ENCODE measurements at regions of chr21 and their contacts with region 1.

Region 1: DNA sequence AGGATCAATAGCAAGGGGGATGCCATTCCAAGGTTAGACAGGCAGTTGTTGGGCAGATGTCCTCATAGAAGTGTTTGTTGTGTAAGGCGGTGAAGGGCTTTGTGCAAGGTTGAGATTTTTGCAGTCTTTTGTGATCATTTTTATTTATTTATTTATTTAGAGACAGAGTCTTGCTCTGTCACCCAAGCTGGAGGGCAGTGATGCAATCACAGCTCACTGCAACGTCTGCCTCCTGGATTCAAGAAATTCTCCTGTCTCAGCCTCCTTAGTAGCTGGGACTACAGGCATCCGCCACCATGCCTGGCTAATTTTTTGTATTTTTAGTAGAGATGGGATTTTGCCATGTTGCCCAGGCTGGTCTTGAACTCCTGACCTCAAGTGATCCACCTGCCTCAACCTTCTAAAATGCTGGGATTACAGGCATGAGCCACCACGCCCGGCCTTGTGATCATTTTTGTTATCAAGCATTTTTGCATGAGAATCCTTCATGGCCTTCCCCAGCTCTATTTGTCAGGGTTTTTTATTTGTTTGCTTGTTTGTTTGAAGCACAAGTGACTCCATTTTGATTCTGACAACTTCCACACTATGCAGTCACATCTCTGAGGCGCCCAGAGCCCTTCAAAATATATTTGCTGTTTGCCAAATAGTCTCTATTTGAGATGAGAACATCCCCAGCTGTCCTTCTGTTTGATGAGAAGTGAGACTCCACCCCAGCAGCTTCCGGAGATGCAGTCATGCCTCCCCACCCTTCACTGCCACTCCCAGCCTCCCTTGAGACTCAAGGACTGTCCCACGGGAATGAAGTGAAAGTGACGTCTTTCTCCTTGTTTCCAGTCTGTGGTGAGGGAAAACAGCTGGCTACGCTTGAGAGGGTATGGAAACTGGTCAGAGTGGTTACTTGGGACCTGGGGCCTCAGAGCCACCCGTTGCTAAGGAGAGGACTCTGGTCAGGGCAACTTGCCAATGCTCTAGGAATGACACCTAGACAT is 38.0 kb downstream of the TMEM50B start:
- DNase-seq: peak in 2 of 3 donors; percentile 66 to 70
- ATAC-seq: peak; percentile 71 to 79
- H3K4me3 ChIP-seq: no peak overlapping the region
- H3K27ac ChIP-seq: peak overlapping the region; percentile 38
- H3K4me1 ChIP-seq: no peaks in the 10 kb centered on the region
- H3K27me3 ChIP-seq: no peaks in the 10 kb centered on the region

Region 2: DNA sequence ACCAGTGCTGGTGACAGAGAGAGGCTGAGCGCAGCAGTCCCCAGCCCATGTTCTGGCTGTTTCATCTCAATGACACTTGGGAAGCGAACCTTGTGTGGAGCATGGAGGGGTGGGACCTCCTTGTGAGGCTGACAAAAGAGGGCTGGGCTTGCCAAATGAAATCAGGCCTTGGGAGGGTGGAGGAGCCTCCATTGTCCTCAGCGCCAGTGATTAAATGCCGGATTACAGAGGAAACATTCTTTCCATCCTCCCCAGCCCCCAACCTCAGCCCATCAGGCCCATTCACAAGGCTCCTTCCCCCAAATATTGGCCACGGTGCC is 606.9 kb before region 1 on chr21:
- intact Hi-C with region 1: loop called in 1 of 4 experiments (anchors 10 kb)
- DNase-seq: no peak
- ATAC-seq: no peak
- H3K4me3 ChIP-seq: no peak overlapping the region
- H3K27ac ChIP-seq: no peak overlapping the region
- H3K4me1 ChIP-seq: no peaks in the 10 kb centered on the region
- H3K27me3 ChIP-seq: no peaks in the 10 kb centered on the region

Region 3: DNA sequence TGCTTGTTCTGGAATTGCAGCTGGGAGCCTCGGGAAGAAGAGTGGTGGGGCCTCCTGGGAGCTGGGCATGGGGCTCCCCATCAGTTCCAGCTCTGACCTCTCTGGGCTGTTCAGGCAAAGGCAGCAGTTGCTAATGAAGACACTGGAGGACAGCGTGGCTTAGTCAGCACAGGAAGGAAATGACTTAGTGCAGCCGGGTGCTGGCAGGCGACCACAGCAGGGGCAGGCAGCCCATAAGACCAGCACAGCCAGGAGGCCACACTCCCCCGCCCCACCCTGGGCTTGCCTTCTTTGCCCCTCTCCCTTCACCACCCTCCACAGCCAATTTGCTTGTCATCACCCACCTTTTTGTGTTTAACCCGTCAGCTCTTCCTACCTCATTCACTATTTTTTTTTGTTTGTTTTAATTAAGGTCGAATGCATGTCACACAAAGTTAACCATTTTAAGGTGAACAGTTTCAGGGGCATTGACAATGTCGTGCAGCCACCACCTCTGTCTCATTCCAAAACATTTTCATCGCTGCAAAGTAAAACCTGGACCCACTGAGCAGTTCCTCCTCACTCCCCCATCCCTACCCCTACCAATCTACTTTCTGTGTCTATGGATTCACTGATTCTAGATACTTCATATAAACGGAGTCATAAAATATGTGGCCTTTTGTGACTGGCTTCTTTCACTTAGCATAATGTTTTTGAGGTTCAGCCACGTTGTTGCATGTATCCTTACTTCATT is 405.2 kb before region 1 on chr21:
- intact Hi-C with region 1: no loop called
- DNase-seq: peak in 1 of 3 donors; percentile 39
- ATAC-seq: peak; percentile 53 to 77
- H3K4me3 ChIP-seq: no peak overlapping the region
- H3K27ac ChIP-seq: no peak overlapping the region
- H3K4me1 ChIP-seq: no peaks in the 10 kb centered on the region
- H3K27me3 ChIP-seq: no peaks in the 10 kb centered on the region

Region 4: GRCh38 chr21:33360881-33361602 is 80.7 kb before region 1 on chr21:
- intact Hi-C with region 1: loop called in 1 of 4 experiments (anchors 10 kb)
- DNase-seq: peak; percentile 70 to 87 (median 85)
- ATAC-seq: peak; percentile 82 to 83
- H3K4me3 ChIP-seq: peak overlapping the region; percentile 54
- H3K27ac ChIP-seq: peak overlapping the region; percentile 75
- H3K4me1 ChIP-seq: peaks cover 3% of the 10 kb centered on the region
- H3K27me3 ChIP-seq: no peaks in the 10 kb centered on the region

Measured in right cardiac atrium (tissue), 5 donors.